Heart right ventricle (tissue), 16 donors: ENCODE measurements at regions of chr5 and their contacts with region 1.

Region 1: DNA sequence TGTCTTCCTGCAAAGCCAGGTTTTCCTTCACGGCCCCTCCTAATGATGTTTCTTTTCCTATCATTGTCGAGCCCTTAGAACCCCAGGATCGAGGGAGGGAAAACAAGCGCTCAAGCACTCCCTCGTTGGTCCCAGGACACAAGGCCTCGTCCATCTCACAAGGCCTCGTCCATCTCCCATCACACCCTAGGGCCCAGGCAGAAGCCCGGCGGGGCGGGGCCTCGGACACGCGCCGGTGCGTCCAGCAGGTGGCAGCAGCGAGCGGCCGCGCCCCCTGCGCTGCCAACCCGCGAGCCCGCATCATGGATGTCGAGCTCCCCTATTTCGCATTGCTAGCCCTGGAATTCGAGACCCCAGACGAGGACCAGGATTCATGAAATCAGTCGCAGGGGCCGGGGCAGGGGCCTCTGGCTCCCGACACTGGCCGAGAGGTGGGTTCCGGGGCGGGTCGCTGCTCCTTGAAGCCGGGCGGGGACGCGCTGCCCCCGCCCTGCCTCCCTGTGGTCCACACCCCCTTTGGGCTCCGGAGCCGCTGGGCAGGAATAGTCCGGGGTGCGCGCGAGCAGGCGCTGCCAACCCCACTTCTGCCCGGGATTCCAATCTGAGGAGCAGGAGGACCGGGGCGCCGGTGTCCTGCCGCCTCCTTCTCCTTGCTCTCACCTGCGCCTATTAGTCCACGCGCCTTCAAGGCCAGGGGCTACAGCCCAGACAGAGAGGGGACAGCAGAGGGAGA is at the start of gene ABLIM3:
- DNase-seq: peak; percentile 64 to 82
- ATAC-seq: peak; percentile 77 to 91 (median 84)
- H3K4me3 ChIP-seq: peak within 1 kb of the TSS; percentile 71 to 98 (median 88)
- H3K27ac ChIP-seq: peak within 1 kb of the TSS; percentile 86 to 95 (median 92)
- H3K4me1 ChIP-seq: peaks cover 3 to 66% (median 25%) of the 10 kb centered on the region in 9 donors
- H3K27me3 ChIP-seq: peaks cover 0 to 7% (median 0%) of the 10 kb centered on the region in 7 donors
- CTCF ChIP-seq: peak; percentile 89 to 98 (median 97)
- total RNA-seq, gene ABLIM3: 66.8 to 189 (median 106) TPM

Region 2: GRCh38 chr5:149175346-149176105 is 34.1 kb after region 1 on chr5:
- intact Hi-C with region 1: loop called in 5 of 10 experiments (anchors 5 kb)
- DNase-seq: peak; percentile 67 to 75
- ATAC-seq: peak; percentile 60 to 91 (median 82)
- H3K4me3 ChIP-seq: no peak overlapping the region
- H3K27ac ChIP-seq: peak overlapping the region; percentile 73 to 92 (median 82)
- H3K4me1 ChIP-seq: peaks cover 9 to 100% (median 85%) of the 10 kb centered on the region in 9 donors
- H3K27me3 ChIP-seq: no peaks in the 10 kb centered on the region
- CTCF ChIP-seq: no peak

Region 3: DNA sequence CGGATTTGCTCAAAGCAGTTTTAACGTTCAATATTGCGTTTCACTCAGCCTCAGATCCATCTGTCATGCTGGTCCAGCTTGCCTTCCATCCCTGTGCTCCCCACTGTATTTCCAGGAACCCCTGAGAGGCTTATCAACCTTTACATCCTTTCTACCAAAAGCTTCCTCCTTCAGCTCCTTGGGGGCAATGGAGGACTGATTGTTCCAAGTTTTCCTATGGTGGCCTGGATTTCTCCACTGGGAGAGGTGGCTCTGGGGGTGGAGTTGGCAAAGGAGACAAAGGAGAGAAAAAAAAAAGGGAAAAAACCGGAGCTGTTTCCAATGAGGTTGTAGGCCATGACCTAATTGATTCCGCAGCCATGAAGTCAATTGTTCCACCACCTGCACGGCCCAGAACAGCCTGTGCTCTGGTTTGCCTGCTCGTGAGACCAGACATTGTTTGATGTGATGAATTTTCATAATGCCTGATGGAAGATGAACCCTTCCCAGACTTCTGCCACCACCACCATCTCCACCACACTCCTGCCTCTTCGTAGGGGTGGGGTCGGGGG is 54.0 kb after region 1 on chr5:
- intact Hi-C with region 1: loop called in 2 of 10 experiments (anchors 1 to 5 kb)
- DNase-seq: peak in 1 of 2 donors; percentile 71
- ATAC-seq: peak; percentile 81 to 94 (median 90)
- H3K4me3 ChIP-seq: no peak overlapping the region
- H3K27ac ChIP-seq: peak overlapping the region; percentile 67 to 90 (median 77)
- H3K4me1 ChIP-seq: peaks cover 3 to 67% (median 34%) of the 10 kb centered on the region in 9 donors
- H3K27me3 ChIP-seq: no peaks in the 10 kb centered on the region
- CTCF ChIP-seq: no peak

Region 4: DNA sequence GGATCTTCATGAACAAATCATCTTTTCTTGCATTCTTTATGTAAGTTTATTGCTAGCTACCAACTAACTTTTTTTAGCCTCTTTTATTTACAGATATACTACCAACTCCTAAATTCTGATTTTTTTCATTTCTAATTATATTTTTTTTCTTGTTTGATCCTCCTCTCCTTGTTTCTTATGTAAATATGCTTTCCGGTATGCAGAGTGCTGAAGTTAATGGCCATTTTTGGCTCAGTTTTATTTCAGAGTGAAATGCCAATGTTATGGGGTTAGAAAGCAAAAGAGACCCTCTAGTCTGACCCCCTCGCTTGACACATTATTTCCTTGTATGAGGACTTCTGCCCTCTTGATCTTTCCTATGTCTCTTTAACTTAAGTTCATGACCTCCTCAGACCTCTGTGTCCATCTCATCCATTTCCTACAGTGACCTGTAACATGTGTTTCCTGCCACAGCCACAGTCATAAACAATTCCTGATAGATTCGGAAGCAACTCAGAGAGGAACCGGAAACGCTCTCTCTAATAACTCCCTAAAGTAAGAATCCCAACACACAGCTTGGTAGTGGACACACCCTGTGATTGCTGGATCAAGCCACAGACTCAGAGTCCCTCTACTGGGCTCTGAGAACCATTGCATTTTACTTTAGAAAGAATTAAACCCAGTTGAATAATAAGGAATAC is 87.4 kb after region 1 on chr5:
- intact Hi-C with region 1: loop called (anchors 1 to 5 kb)
- DNase-seq: peak in 1 of 2 donors; percentile 77
- ATAC-seq: peak; percentile 85 to 95 (median 92)
- H3K4me3 ChIP-seq: no peak overlapping the region
- H3K27ac ChIP-seq: peak overlapping the region; percentile 42 to 79 (median 70)
- H3K4me1 ChIP-seq: peaks cover 10 to 45% (median 36%) of the 10 kb centered on the region in 9 donors
- H3K27me3 ChIP-seq: no peaks in the 10 kb centered on the region
- CTCF ChIP-seq: peak; percentile 69 to 92 (median 79)